ENCODE measurements at regions of chr12 and their contacts with region 1.

Region 1: DNA sequence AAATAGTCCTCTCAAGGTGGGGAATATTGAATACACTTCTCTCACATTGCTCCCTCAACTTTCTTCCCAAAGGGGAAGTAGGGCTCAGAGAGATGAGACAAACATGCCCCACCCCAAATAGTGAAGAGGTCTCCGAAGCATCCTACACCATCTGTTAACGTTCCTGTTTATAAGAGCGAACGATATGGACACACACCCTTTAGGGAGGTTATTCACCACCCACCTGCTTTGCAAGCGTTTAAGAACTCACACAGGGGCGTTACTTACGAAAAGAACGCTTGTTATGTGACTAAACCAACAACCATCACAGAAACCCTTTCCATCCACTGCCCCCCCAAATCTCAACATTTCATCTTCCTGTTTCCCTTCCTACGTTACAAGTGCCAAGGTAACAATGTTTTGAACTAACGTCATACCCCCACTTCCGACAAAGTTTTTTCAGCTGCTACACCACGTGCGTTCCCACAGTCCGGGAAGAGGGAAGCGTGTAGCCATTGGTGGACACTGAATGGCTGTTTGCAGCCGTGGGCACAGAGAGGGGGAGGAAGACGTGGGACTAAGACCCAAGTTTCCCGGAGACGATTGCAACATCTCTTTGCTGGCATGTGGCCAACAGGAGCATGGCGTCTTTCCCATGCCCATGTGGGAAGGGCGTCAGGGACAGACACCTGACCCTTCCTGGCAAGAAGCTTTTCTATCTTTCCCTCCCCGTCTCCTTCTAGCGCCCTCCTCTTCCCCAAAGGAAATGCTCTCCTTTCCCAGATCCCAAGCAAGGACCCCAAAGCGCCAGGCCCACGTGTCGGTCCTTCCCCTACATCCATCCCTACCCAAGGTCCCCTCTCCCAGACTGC is 1.2 kb downstream of the YBX3 start:
- DNase-seq: peak; percentile 93 to 95 (median 94)
- ATAC-seq: peak; percentile 94 to 96
- H3K4me3 ChIP-seq: peak overlapping the region; percentile 85
- H3K27ac ChIP-seq: peak overlapping the region; percentile 87
- H3K4me1 ChIP-seq: peaks cover 7% of the 10 kb centered on the region
- H3K27me3 ChIP-seq: no peaks in the 10 kb centered on the region

Region 2: DNA sequence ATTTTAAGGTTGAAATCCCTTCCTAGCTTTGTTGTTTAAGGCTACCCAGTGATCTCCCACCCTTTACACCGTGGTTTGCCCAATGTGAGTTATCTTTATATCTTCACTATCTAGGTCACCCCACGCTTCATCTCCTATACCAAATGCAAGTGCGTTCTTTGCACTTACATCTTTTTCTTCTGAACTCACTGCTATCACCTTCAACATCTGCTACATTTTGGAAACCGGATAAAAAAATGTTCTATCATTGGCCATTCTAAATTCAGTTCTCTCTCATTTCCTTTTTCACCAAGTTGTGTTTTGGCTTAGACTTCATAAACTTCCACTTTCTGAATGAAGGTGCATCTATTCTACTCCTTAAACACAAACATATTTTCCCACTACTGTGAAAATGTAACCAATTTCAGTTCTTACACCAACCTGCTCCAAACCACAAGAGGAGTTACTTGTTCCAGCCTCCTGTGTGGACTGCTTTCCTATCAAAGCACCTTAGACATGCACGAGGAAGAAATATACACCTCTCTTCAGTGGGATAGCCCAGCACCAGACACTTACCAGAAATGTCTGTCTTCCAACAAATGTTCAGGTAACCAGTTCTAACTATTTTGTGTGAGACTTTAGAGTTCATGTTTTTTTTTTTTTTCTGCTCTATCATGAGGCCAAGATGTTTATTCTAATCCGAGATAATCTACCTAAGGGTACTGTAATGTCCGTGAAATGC is 669.5 kb before region 1 on chr12:
- intact Hi-C with region 1: no loop called
- DNase-seq: no peak
- ATAC-seq: no peak
- H3K4me3 ChIP-seq: no peak overlapping the region
- H3K27ac ChIP-seq: no peak overlapping the region
- H3K4me1 ChIP-seq: no peaks in the 10 kb centered on the region
- H3K27me3 ChIP-seq: no peaks in the 10 kb centered on the region

Region 3: DNA sequence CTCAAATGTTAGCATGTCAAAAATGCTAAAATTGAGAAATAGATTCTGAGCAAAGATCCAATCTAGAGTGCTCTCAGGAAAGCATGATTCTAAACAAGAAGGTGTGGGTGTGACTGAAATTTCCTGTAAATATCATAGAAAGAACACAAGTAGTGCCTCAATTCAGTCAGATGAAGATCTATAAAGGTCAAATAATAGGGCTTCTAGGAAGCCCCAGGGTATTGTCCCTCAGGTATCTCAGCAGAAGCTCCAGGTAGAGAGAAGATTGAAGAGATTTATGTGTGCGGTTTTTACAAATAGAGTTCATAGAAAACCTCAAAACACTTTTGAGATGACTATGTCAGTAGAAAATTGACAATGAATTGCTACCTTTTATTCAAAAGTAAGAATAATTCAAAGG is 401.2 kb before region 1 on chr12:
- intact Hi-C with region 1: no loop called
- DNase-seq: no peak
- ATAC-seq: no peak
- H3K4me3 ChIP-seq: no peak overlapping the region
- H3K27ac ChIP-seq: no peak overlapping the region
- H3K4me1 ChIP-seq: no peaks in the 10 kb centered on the region
- H3K27me3 ChIP-seq: no peaks in the 10 kb centered on the region

Region 4: DNA sequence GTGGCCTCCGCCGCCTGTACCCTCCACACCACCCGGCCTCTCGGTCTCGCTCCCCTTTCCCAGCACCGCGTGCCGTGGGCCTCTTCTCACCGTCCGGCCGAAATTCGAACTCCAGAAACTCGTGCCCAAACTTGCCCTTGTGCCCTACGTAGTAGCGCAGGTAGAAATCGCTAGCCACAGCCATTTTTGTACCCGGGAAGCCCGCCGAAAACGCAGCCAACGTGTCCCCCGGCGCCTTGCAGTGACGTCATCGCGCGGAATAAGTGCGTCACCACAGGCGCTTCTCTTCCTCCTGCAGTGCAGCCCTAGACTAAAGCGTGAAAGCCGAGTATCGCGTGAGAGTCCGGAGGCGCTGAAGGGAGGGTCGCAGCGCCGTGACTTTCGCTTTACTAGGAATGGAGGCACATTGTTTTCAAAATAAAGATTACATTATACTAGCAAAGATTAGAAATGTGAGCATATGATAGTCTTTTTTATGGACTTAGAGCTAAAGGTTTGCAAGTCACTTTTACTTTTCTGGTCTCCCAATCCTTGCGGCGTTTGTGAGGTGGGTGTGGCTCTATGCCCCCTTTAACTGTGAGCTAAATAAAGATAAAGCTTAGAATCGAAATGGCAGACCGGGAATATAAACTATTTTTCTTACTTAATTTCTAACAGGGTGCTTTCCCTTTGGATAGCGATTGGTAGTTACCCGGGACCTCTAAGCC is 108.4 kb before region 1 on chr12 and contains the start of gene MAGOHB:
- intact Hi-C with region 1: loop called in 2 of 4 experiments (anchors 10 kb)
- DNase-seq: peak; percentile 96 to 99 (median 98)
- ATAC-seq: peak; percentile 100
- H3K4me3 ChIP-seq: peak within 1 kb of the TSS; percentile 98
- H3K27ac ChIP-seq: peak within 1 kb of the TSS; percentile 94
- H3K4me1 ChIP-seq: no peaks in the 10 kb centered on the region
- H3K27me3 ChIP-seq: no peaks in the 10 kb centered on the region
- total RNA-seq, gene MAGOHB: 12.8 to 17.4 (median 14.0) TPM

Measured in right cardiac atrium (tissue), 5 donors.